Natural killer cell (primary cell): ENCODE measurements at regions of chr1 and their contacts with region 1.

Region 1: GRCh38 chr1:161702250-161702649 is 4.8 kb upstream of the FCRLA start:
- DNase-seq: no peak
- ATAC-seq: no peak
- H3K4me3 ChIP-seq: no peak overlapping the region
- H3K4me3 Mint-ChIP-seq: no peak overlapping the region
- H3K27ac ChIP-seq: no peak overlapping the region
- H3K27ac Mint-ChIP-seq: no peak overlapping the region
- H3K4me1 ChIP-seq: no peaks in the 10 kb centered on the region
- H3K4me1 Mint-ChIP-seq: peaks cover 8 to 13% of the 10 kb centered on the region in 2 donors
- H3K27me3 ChIP-seq: no peaks in the 10 kb centered on the region
- H3K27me3 Mint-ChIP-seq: peaks cover 0 to 4% of the 10 kb centered on the region in 2 donors
- CTCF ChIP-seq: no peak

Region 2: DNA sequence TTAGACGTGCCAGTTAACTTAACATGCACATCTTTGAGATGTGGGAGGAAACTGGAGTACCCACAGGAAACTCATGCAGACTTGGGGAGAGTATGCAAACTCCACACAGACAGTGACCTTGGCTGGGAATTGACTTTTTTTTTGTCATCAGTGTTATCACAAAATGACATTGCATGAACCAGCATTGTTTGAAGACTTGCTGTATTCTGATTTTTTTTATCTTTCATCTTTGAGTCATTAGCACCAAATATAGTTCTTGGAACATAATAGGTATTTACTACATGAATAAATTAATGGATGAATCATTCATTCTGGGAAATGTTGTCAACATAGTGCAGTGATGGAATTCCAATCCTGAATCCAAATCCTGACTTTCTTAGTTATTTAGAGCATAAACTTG is 140.9 kb after region 1 on chr1:
- intact Hi-C with region 1: loop called (anchors 5 kb)
- DNase-seq: no peak
- ATAC-seq: no peak
- H3K4me3 ChIP-seq: no peak overlapping the region
- H3K4me3 Mint-ChIP-seq: no peak overlapping the region
- H3K27ac ChIP-seq: no peak overlapping the region
- H3K27ac Mint-ChIP-seq: no peak overlapping the region
- H3K4me1 ChIP-seq: no peaks in the 10 kb centered on the region
- H3K4me1 Mint-ChIP-seq: peaks cover 3 to 8% of the 10 kb centered on the region in 2 donors
- H3K27me3 ChIP-seq: no peaks in the 10 kb centered on the region
- H3K27me3 Mint-ChIP-seq: no peaks in the 10 kb centered on the region
- CTCF ChIP-seq: no peak